T-cell (primary cell): ENCODE measurements at regions of chr6 and their contacts with region 1.

Region 1: DNA sequence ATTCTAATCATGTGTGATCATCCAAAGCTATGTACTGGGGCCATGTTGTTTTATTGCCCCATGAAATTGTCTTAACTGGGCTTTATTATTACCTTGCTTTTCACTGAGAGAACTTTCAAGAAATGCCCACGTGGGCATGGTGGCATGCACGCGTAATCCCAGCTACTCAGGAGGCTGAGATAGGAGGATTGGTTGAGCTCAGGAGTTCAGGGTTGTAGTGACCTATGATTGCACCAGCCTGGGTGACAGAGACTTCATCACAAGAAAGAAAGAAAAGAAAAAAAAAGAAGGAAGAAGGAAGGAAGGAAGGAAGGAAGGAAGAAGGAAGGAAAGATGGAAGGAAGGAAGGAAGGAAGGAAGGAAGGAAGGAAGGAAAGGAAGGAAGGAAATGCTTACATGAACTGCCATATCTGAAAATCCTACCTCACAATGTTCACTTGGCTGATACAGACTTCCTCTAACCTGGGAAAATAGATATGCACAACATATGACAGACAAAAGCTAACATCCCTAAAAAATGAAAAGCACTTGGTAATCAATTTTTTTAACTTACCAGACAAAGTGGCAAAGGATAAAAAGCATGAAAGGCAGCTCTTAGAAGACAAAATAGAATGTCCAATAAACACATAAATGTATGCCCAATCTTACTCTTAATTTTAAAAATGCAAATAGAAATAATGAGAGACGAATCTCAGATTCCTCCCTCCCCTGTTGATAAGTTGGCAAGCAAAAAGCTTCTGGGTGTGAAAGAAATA is 25.5 kb upstream of the TMEM244 start:
- DNase-seq: no peak
- ATAC-seq: no peak
- H3K4me3 ChIP-seq: no peak overlapping the region
- H3K4me3 Mint-ChIP-seq: no peak overlapping the region
- H3K27ac ChIP-seq: no peak overlapping the region
- H3K27ac Mint-ChIP-seq: no peak overlapping the region
- H3K4me1 ChIP-seq: no peaks in the 10 kb centered on the region
- H3K4me1 Mint-ChIP-seq: peaks cover 6 to 12% (median 11%) of the 10 kb centered on the region in 3 donors
- H3K27me3 ChIP-seq: no peaks in the 10 kb centered on the region
- H3K27me3 Mint-ChIP-seq: peaks cover 3 to 4% of the 10 kb centered on the region in 2 donors

Region 2: DNA sequence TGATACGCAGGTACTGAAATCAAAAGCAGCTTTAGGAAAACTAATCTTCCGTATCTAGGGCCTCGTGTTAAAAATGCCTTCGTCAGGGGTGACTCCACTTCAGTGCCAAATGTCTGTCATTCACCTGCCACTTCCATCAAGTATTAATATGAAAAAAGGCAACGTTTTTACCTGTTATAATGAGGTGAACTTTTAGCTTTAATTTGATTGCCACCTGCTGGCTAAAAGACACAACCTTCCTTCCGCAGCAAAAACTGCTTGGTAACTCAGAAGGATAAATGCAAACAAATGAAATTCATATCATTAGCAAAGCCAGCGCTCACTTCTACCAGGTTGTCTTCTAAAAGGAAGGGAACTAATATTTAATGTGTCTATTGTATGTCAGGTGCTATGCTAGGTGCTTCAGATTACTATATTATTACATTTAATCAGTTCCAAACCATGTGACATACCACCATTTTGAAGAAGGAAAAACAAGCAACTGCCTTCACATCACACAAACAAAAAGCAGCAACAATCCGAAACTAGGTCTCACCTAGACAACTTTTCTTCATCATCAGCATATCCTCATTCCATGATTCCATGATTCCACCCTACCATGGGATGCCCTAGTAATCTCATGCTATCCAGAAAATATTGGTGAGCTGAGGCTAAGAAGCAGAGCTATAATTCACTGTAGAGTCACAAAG is 156.0 kb before region 1 on chr6:
- CTCF ChIA-PET with region 1: no interaction called
- POLR2A ChIA-PET with region 1: no interaction called
- DNase-seq: peak in 14 of 35 experiments; percentile 3 to 70 (median 16)
- ATAC-seq: peak in 3 of 4 experiments; percentile 60 to 64 (median 60)
- H3K4me3 ChIP-seq: no peak overlapping the region
- H3K4me3 Mint-ChIP-seq: no peak overlapping the region
- H3K27ac ChIP-seq: no peak overlapping the region
- H3K27ac Mint-ChIP-seq: peak overlapping the region in 1 of 2 donors; percentile 25
- H3K4me1 ChIP-seq: peaks cover 0 to 2% of the 10 kb centered on the region in 2 experiments
- H3K4me1 Mint-ChIP-seq: peaks cover 5 to 16% (median 13%) of the 10 kb centered on the region in 3 donors
- H3K27me3 ChIP-seq: no peaks in the 10 kb centered on the region
- H3K27me3 Mint-ChIP-seq: no peaks in the 10 kb centered on the region

Region 3: GRCh38 chr6:129901910-129902309 is 15.3 kb after region 1 on chr6:
- CTCF ChIA-PET with region 1: interaction called in 1 of 2 experiments, 11 read pairs
- POLR2A ChIA-PET with region 1: no interaction called
- DNase-seq: no peak
- ATAC-seq: no peak
- H3K4me3 ChIP-seq: no peak overlapping the region
- H3K4me3 Mint-ChIP-seq: no peak overlapping the region
- H3K27ac ChIP-seq: no peak overlapping the region
- H3K27ac Mint-ChIP-seq: no peak overlapping the region
- H3K4me1 ChIP-seq: no peaks in the 10 kb centered on the region
- H3K4me1 Mint-ChIP-seq: peaks cover 0 to 4% (median 4%) of the 10 kb centered on the region in 3 donors
- H3K27me3 ChIP-seq: no peaks in the 10 kb centered on the region
- H3K27me3 Mint-ChIP-seq: peaks cover 3% of the 10 kb centered on the region in 2 donors